ENCODE measurements at regions of chr20 and their contacts with region 1.

Region 1: GRCh38 chr20:45373353-45374100 is 4.6 kb downstream of the TP53TG5 start:
- DNase-seq: peak; percentile 87 to 93 (median 89)
- H3K4me3 ChIP-seq: peak overlapping the region in 2 of 4 donors; percentile 42 to 59
- H3K27ac ChIP-seq: peak overlapping the region in 2 of 5 donors; percentile 37 to 64
- H3K4me1 ChIP-seq: peaks cover 0 to 10% of the 10 kb centered on the region in 2 donors
- H3K27me3 ChIP-seq: no peaks in the 10 kb centered on the region
- CTCF ChIP-seq: peak; percentile 70 to 92 (median 90)
- POLR2A ChIP-seq: no peak

Region 2: DNA sequence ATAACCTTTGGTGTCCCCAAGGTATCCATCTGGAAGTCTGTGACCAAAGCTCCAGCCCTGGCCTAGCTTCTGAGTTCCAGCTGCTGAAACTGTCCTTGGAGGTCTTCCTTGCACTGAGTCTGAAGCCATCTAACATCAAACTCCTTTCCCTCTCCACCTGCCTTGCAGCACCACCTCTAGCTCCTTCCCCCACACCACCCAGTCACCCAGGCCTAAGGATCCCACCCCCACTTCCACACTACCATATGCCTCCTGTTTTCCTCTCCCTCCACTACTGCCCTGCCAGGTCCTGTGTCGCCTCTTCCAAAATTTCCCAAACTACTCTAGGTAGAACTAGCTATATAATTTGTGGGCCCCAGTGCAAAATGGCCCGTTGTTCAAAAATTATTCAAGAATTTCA is 54.6 kb before region 1 on chr20:
- intact Hi-C with region 1: loop called in 1 of 2 experiments (anchors 5 kb)
- DNase-seq: no peak
- H3K4me3 ChIP-seq: no peak overlapping the region
- H3K27ac ChIP-seq: no peak overlapping the region
- H3K4me1 ChIP-seq: no peaks in the 10 kb centered on the region
- H3K27me3 ChIP-seq: peaks cover 13% of the 10 kb centered on the region
- CTCF ChIP-seq: no peak
- POLR2A ChIP-seq: no peak

Region 3: GRCh38 chr20:45329510-45330319 is 43.8 kb before region 1 on chr20:
- intact Hi-C with region 1: loop called in 1 of 2 experiments (anchors 5 kb)
- DNase-seq: no peak
- H3K4me3 ChIP-seq: no peak overlapping the region
- H3K27ac ChIP-seq: no peak overlapping the region
- H3K4me1 ChIP-seq: no peaks in the 10 kb centered on the region
- H3K27me3 ChIP-seq: no peaks in the 10 kb centered on the region
- CTCF ChIP-seq: no peak
- POLR2A ChIP-seq: no peak

Region 4: DNA sequence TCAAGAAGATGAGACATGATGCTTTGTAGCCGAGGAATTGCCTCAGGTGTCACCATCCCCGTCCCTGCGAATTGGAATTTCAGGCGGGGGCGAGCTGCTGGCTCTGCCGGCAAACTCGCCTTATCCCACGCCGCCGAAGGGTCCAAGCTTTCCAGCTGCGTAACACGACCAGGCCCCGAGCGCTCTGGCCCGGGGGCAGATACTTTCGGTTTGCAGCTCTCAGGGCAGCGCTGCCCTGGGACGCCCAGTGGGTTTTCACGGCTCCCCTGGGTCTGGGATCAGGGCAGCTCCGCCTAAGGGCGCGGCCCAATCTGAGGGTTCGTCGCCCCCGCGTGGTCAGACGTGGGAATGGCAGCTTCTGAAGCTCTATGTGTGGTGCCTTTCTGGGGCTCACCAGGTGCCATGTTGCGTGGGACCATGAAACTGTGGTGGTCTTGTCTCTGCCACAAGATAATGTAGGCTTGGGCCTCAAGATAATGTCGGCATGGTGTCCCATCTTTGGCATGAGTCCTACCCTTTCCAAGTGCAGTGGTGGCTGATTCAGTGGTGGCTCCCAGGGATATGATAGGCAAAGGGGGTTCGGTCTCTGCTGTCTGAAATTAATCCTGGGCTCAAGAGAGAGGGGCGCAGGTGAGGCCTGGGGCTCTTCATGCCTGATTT is 63.3 kb after region 1 on chr20:
- intact Hi-C with region 1: loop called (anchors 2 to 5 kb)
- DNase-seq: peak; percentile 88 to 96 (median 91)
- H3K4me3 ChIP-seq: peak overlapping the region; percentile 7 to 69 (median 42)
- H3K27ac ChIP-seq: peak overlapping the region in 3 of 5 donors; percentile 64 to 82 (median 75)
- H3K4me1 ChIP-seq: no peaks in the 10 kb centered on the region
- H3K27me3 ChIP-seq: no peaks in the 10 kb centered on the region
- CTCF ChIP-seq: peak; percentile 85 to 98 (median 96)
- POLR2A ChIP-seq: peak in 1 of 2 donors; percentile 18